Activated CD8-positive, alpha-beta T cell treated with anti-CD3 and anti-CD28 coated beads for 36 hours (primary cell): ENCODE measurements at regions of chr17 and their contacts with region 1.

Region 1: DNA sequence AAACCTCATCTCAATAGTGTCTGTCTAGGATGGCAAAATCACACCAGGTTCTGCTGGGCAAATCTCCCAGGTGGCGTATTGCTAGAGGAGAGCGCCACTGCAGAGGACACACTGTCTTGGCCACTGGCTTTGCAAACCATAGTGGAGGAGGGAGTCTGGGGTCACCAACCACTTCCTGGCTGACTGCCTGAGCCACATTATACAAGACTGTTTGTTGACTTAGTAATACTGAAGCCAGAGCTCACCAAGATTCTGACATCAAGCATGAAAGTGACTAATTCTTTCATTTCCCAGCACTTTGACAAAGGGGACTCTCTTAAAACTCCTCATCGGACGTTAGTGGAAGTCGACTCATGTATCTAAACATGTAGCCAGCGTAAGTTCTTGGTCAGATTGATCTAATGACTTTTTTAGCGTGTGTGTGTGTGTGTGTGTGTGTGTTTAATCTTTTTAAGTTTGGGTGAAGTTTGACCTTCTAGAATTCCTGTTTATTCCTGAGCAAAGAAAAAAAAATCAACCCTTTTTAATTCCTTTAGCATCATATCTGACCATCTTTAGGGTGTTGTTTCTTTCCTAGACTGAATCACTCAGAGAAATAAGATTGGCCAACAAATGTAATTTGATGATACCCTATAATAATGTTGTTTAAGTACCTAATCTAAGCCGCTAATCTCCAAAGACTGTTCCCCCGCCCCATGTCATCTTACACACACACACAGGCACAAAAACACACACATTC is 13.7 kb downstream of the PITPNC1 start:
- DNase-seq: peak; percentile 90
- ATAC-seq: peak; percentile 88
- H3K4me3 Mint-ChIP-seq: peak overlapping the region; percentile 69
- H3K27ac Mint-ChIP-seq: peak overlapping the region; percentile 99
- H3K4me1 Mint-ChIP-seq: peaks cover 85% of the 10 kb centered on the region
- H3K27me3 Mint-ChIP-seq: no peaks in the 10 kb centered on the region
- CTCF ChIP-seq: no peak

Region 2: DNA sequence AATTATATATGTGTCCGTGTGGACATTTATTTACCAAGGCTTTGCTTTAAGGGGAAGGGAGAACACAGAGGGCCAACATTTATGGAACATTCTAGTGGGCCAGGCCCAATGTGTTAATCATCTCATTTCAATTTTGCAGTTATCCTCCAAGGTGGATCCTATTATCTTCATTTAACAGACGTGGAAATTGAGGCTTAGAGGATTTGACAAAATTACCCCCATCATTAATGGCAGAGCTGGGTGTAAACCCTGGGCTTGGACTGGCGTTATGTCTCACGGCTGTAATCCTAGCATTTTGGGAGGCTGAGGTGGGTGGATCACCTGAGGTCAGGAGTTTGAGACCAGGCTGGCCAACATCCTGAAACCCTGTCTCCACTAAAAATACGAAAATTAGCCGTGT is 12.7 kb after region 1 on chr17:
- CTCF ChIA-PET with region 1: interaction called, 10 read pairs
- POLR2A ChIA-PET with region 1: interaction called, 4 read pairs
- intact Hi-C with region 1: no loop called
- DNase-seq: no peak
- ATAC-seq: no peak
- H3K4me3 Mint-ChIP-seq: no peak overlapping the region
- H3K27ac Mint-ChIP-seq: peak overlapping the region; percentile 90
- H3K4me1 Mint-ChIP-seq: peaks cover 78% of the 10 kb centered on the region
- H3K27me3 Mint-ChIP-seq: no peaks in the 10 kb centered on the region
- CTCF ChIP-seq: no peak

Region 3: GRCh38 chr17:67431249-67432048 is 40.6 kb after region 1 on chr17:
- CTCF ChIA-PET with region 1: interaction called, 37 read pairs
- POLR2A ChIA-PET with region 1: interaction called, 13 read pairs
- intact Hi-C with region 1: loop called (anchors 2 kb)
- DNase-seq: peak; percentile 36
- ATAC-seq: peak; percentile 69
- H3K4me3 Mint-ChIP-seq: peak overlapping the region; percentile 6
- H3K27ac Mint-ChIP-seq: peak overlapping the region; percentile 84
- H3K4me1 Mint-ChIP-seq: peaks cover 69% of the 10 kb centered on the region
- H3K27me3 Mint-ChIP-seq: no peaks in the 10 kb centered on the region
- CTCF ChIP-seq: no peak

Region 4: DNA sequence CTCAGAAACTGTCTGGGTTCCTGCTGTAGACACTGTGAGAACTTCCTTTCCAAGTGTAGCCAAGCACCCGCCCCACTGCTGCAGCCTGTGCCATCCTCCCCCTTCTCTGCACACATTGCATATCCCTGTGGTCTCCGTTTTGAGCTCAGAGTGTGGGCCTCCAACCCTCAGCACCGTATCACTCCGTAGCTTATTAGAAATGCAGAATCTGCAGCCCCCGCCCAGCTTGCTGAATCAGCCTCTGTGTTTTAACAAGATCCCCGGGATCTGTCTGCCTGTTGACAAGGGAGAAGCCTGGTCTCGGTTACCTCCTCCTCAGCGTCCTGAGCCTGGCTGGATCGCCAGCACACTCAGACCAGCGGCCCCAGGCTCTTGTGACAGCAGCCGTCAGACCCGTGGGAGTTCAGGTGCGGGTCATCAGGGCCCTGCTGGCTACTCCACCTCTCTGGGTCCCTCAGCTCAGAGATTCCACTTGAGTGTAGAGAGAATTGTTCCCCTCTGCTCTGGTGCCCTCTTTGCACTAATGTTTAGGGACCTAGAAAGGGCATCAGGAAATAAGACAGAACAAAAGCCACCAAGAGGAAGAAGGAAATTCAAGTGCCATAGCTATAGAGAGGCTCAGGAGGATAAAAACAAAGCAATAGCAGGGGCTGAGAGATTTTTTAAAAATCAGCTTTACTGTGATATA is 78.5 kb after region 1 on chr17:
- CTCF ChIA-PET with region 1: interaction called, 119 read pairs
- POLR2A ChIA-PET with region 1: interaction called, 24 read pairs
- intact Hi-C with region 1: no loop called
- DNase-seq: peak; percentile 80
- ATAC-seq: peak; percentile 79
- H3K4me3 Mint-ChIP-seq: peak overlapping the region; percentile 66
- H3K27ac Mint-ChIP-seq: peak overlapping the region; percentile 94
- H3K4me1 Mint-ChIP-seq: peaks cover 71% of the 10 kb centered on the region
- H3K27me3 Mint-ChIP-seq: no peaks in the 10 kb centered on the region
- CTCF ChIP-seq: no peak

Region 5: GRCh38 chr17:67546578-67547527 is 156.0 kb after region 1 on chr17:
- CTCF ChIA-PET with region 1: no interaction called
- POLR2A ChIA-PET with region 1: no interaction called
- intact Hi-C with region 1: no loop called
- DNase-seq: no peak
- ATAC-seq: no peak
- H3K4me3 Mint-ChIP-seq: no peak overlapping the region
- H3K27ac Mint-ChIP-seq: no peak overlapping the region
- H3K4me1 Mint-ChIP-seq: peaks cover 34% of the 10 kb centered on the region
- H3K27me3 Mint-ChIP-seq: no peaks in the 10 kb centered on the region
- CTCF ChIP-seq: no peak

Region 6: GRCh38 chr17:67602956-67603355 is 212.1 kb after region 1 on chr17:
- CTCF ChIA-PET with region 1: interaction called, 10 read pairs
- POLR2A ChIA-PET with region 1: no interaction called
- intact Hi-C with region 1: no loop called
- DNase-seq: peak; percentile 70
- ATAC-seq: peak; percentile 95
- H3K4me3 Mint-ChIP-seq: no peak overlapping the region
- H3K27ac Mint-ChIP-seq: peak overlapping the region; percentile 44
- H3K4me1 Mint-ChIP-seq: peaks cover 23% of the 10 kb centered on the region
- H3K27me3 Mint-ChIP-seq: no peaks in the 10 kb centered on the region
- CTCF ChIP-seq: peak; percentile 65